B cell (primary cell): ENCODE measurements at regions of chr7 and their contacts with region 1.

Region 1: DNA sequence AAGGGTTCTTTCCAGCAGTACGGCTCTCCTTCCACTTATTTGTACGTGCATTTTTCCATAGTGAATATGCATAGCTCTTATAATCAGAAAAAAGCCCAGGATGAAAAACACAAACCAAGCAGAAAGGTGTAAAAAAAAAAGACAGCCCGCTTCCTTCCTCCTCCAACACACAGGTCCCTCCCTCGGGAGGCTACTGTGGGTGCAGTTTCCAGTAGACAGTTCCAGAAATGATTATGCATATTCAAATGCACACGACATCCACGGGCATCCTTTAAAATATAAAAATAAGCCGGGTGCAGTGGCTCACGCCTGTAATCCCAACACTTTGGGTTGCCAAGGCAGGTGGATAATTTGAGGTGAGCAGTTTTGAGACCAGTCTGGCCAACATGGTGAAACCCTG is 59.9 kb downstream of the TNRC18 start:
- DNase-seq: no peak
- ATAC-seq: peak; percentile 25
- H3K4me3 ChIP-seq: no peak overlapping the region
- H3K4me3 Mint-ChIP-seq: no peak overlapping the region
- H3K27ac ChIP-seq: no peak overlapping the region
- H3K27ac Mint-ChIP-seq: peak overlapping the region; percentile 5
- H3K4me1 ChIP-seq: peaks cover 7 to 23% of the 10 kb centered on the region in 2 donors
- H3K4me1 Mint-ChIP-seq: peaks cover 18% of the 10 kb centered on the region
- H3K27me3 ChIP-seq: no peaks in the 10 kb centered on the region
- H3K27me3 Mint-ChIP-seq: no peaks in the 10 kb centered on the region
- CTCF ChIP-seq: no peak

Region 2: GRCh38 chr7:5218564-5219360 is 145.0 kb before region 1 on chr7:
- CTCF ChIA-PET with region 1: no interaction called
- POLR2A ChIA-PET with region 1: no interaction called
- intact Hi-C with region 1: no loop called
- DNase-seq: peak; percentile 92
- ATAC-seq: peak; percentile 92
- H3K4me3 ChIP-seq: peak overlapping the region in 2 of 5 experiments; percentile 3 to 20
- H3K4me3 Mint-ChIP-seq: peak overlapping the region; percentile 76
- H3K27ac ChIP-seq: peak overlapping the region; percentile 80 to 89
- H3K27ac Mint-ChIP-seq: peak overlapping the region; percentile 89
- H3K4me1 ChIP-seq: peaks cover 25 to 33% of the 10 kb centered on the region in 2 donors
- H3K4me1 Mint-ChIP-seq: peaks cover 30% of the 10 kb centered on the region
- H3K27me3 ChIP-seq: no peaks in the 10 kb centered on the region
- H3K27me3 Mint-ChIP-seq: no peaks in the 10 kb centered on the region
- CTCF ChIP-seq: no peak

Region 3: GRCh38 chr7:5237286-5237685 is 126.4 kb before region 1 on chr7:
- CTCF ChIA-PET with region 1: interaction called, 20 read pairs
- POLR2A ChIA-PET with region 1: no interaction called
- intact Hi-C with region 1: no loop called
- DNase-seq: peak; percentile 38
- ATAC-seq: no peak
- H3K4me3 ChIP-seq: no peak overlapping the region
- H3K4me3 Mint-ChIP-seq: peak overlapping the region; percentile 78
- H3K27ac ChIP-seq: no peak overlapping the region
- H3K27ac Mint-ChIP-seq: peak overlapping the region; percentile 84
- H3K4me1 ChIP-seq: peaks cover 61 to 67% of the 10 kb centered on the region in 2 donors
- H3K4me1 Mint-ChIP-seq: peaks cover 59% of the 10 kb centered on the region
- H3K27me3 ChIP-seq: peaks cover 0 to 9% (median 4%) of the 10 kb centered on the region in 4 experiments
- H3K27me3 Mint-ChIP-seq: peaks cover 5% of the 10 kb centered on the region
- CTCF ChIP-seq: no peak

Region 4: DNA sequence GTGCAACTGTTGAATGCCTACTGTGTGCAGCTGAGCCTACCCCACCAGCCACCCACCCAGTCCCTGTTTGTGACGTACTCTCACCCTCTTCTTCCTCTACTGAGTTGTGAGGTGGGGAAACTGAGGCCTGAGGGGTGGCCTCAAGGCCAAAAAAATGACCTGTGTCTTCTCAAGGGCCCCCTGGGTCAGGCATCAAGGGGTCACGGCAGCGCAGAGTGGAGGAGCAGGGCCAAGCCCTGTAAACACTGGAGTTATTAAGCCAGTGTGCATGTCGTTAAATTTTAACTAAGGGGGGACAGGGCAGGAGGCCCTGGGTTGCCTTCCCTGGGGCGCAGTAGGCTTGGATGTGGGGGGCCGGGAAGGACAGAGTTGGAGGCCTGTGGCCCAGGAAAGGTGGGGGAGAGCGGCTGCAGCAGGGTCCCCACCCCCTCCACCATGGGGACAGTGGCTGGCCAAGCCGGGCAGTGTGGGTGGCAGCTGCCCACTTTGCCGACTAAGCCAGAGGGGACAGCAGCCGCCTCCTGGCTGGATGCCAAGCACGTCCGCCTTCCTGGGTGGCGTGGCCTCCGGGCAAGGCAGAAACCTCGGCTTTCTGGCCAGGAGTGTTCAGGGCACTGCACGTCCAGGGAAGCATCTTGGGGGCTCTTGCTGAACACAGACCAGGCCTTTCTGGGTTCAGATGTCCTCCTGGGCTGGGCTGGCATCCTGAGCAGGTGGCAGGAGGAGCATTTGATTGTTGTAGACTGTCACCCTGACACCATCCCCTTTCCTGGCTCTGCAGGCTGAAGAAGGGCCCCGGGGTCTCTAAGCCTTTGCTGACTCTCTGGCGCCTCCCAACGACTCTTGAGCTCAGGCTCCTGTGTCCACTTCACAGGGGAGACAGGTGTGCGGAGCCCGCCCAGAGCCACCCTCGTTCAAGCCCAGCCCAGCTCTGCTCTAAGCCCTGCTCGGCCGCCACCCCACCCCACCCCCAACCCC is 79.1 kb before region 1 on chr7:
- CTCF ChIA-PET with region 1: no interaction called
- POLR2A ChIA-PET with region 1: no interaction called
- intact Hi-C with region 1: no loop called
- DNase-seq: peak; percentile 51
- ATAC-seq: peak; percentile 41
- H3K4me3 ChIP-seq: no peak overlapping the region
- H3K4me3 Mint-ChIP-seq: peak overlapping the region; percentile 69
- H3K27ac ChIP-seq: no peak overlapping the region
- H3K27ac Mint-ChIP-seq: no peak overlapping the region
- H3K4me1 ChIP-seq: peaks cover 6% of the 10 kb centered on the region in 2 donors
- H3K4me1 Mint-ChIP-seq: peaks cover 2% of the 10 kb centered on the region
- H3K27me3 ChIP-seq: peaks cover 0 to 23% (median 8%) of the 10 kb centered on the region in 4 experiments
- H3K27me3 Mint-ChIP-seq: peaks cover 18% of the 10 kb centered on the region
- CTCF ChIP-seq: no peak

Region 5: GRCh38 chr7:5345671-5346070 is 18.1 kb before region 1 on chr7:
- CTCF ChIA-PET with region 1: no interaction called
- POLR2A ChIA-PET with region 1: no interaction called
- intact Hi-C with region 1: no loop called
- DNase-seq: no peak
- ATAC-seq: no peak
- H3K4me3 ChIP-seq: no peak overlapping the region
- H3K4me3 Mint-ChIP-seq: no peak overlapping the region
- H3K27ac ChIP-seq: no peak overlapping the region
- H3K27ac Mint-ChIP-seq: no peak overlapping the region
- H3K4me1 ChIP-seq: no peaks in the 10 kb centered on the region
- H3K4me1 Mint-ChIP-seq: no peaks in the 10 kb centered on the region
- H3K27me3 ChIP-seq: no peaks in the 10 kb centered on the region
- H3K27me3 Mint-ChIP-seq: no peaks in the 10 kb centered on the region
- CTCF ChIP-seq: no peak

Region 6: GRCh38 chr7:5423844-5424688 is 60.3 kb after region 1 on chr7:
- CTCF ChIA-PET with region 1: interaction called, 4 read pairs
- POLR2A ChIA-PET with region 1: no interaction called
- intact Hi-C with region 1: loop called (anchors 2 kb)
- DNase-seq: peak; percentile 82
- ATAC-seq: peak; percentile 59
- H3K4me3 ChIP-seq: peak overlapping the region; percentile 21 to 70 (median 52)
- H3K4me3 Mint-ChIP-seq: peak overlapping the region; percentile 84
- H3K27ac ChIP-seq: no peak overlapping the region
- H3K27ac Mint-ChIP-seq: peak overlapping the region; percentile 69
- H3K4me1 ChIP-seq: peaks cover 92 to 94% of the 10 kb centered on the region in 2 donors
- H3K4me1 Mint-ChIP-seq: peaks cover 56% of the 10 kb centered on the region
- H3K27me3 ChIP-seq: peaks cover 0 to 93% (median 64%) of the 10 kb centered on the region in 4 experiments
- H3K27me3 Mint-ChIP-seq: peaks cover 29% of the 10 kb centered on the region
- CTCF ChIP-seq: no peak

Region 7: DNA sequence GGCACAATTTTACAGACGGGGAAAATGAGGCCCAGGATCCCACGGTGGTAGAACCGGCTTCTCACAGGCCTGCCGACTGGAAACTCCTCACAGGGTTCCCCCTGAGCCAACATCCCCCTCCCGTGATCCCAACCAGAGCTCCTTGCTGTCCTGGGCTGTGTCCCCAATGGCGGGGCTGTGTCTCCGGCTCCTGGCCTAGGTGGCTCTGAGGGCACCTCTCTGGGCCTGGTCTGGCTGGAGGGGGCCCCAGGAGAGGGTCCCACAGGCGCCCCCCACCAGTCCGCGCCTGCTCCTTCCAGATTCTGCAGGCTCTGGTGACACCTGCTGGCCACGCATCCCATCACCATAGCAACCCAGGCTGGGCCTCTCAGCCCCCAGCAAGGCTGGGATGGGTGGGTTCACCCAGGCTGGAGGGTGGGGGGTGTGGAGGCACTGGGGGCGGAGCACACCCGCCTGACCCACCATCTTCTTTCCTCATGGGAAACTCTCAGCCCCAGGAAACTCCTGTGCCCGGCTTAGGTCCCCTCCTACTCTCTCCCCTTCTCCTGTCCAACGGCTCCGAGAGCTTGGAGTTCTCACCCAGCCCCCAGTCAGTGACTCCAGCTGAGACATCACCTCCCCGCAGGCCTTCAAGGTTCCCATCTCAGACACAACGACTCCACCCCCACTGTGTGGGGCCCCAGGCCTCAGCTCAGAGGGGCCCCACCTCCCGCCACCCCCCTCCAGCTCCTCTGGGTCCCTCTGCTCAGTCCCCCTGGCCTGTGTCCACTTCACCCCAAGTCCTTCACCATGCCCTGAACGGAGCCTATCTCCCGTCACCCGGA is 87.0 kb after region 1 on chr7:
- CTCF ChIA-PET with region 1: interaction called, 54 read pairs
- POLR2A ChIA-PET with region 1: no interaction called
- intact Hi-C with region 1: no loop called
- DNase-seq: peak; percentile 52
- ATAC-seq: peak; percentile 68
- H3K4me3 ChIP-seq: no peak overlapping the region
- H3K4me3 Mint-ChIP-seq: no peak overlapping the region
- H3K27ac ChIP-seq: no peak overlapping the region
- H3K27ac Mint-ChIP-seq: no peak overlapping the region
- H3K4me1 ChIP-seq: no peaks in the 10 kb centered on the region
- H3K4me1 Mint-ChIP-seq: no peaks in the 10 kb centered on the region
- H3K27me3 ChIP-seq: peaks cover 0 to 4% (median 0%) of the 10 kb centered on the region in 4 experiments
- H3K27me3 Mint-ChIP-seq: peaks cover 2% of the 10 kb centered on the region
- CTCF ChIP-seq: peak; percentile 47

Region 8: DNA sequence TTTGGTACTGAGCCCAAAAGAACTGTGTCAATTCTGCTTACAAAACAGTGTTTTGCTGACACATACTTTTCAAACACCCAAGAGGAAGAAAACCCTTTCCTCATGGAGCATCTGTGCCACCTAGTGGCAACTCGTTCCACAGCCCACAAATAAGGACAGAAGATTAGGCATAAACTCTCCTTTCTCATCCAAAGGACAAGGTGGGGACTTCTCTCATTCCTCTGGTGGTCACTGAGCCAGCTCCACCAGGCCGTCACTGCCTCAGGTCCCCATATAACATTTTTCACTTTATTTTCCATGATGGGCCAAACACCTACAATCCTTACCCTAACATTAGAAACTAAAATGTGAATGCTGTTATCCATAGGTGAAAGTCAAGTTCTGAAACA is 340.8 kb after region 1 on chr7:
- CTCF ChIA-PET with region 1: interaction called, 9 read pairs
- POLR2A ChIA-PET with region 1: no interaction called
- intact Hi-C with region 1: loop called (anchors 10 kb)
- DNase-seq: peak; percentile 87
- ATAC-seq: peak; percentile 54
- H3K4me3 ChIP-seq: no peak overlapping the region
- H3K4me3 Mint-ChIP-seq: no peak overlapping the region
- H3K27ac ChIP-seq: no peak overlapping the region
- H3K27ac Mint-ChIP-seq: no peak overlapping the region
- H3K4me1 ChIP-seq: peaks cover 15 to 30% of the 10 kb centered on the region in 2 donors
- H3K4me1 Mint-ChIP-seq: peaks cover 35% of the 10 kb centered on the region
- H3K27me3 ChIP-seq: no peaks in the 10 kb centered on the region
- H3K27me3 Mint-ChIP-seq: no peaks in the 10 kb centered on the region
- CTCF ChIP-seq: peak; percentile 93